K562 (cell line): ENCODE measurements at regions of chr5 and their contacts with region 1.

Region 1: DNA sequence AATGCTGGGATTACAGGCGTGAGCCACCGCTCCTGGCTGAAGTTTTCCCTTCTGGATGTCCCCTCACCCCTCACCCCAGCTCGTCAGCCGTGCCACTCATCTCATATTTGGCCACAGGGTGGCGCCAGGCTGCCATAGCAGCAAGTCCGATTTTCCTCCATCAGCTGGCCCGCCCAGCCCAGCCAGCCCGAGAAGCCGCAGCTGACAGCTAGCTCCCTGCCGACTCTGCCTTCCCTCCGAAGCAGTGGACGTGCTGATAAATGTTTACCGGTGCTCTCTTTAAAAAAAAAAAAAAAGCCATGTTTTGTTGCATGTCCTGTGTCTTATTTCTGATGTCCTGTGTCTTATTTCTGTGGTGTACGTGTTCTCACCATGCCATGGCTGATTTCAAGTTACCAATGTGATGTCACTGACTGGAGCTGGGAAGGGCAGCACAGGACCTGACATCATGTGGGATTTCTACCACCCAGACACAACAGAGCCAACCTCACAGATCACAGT is 58.3 kb downstream of the PFDN1 start:
- DNase-seq: peak; percentile 77 to 90 (median 81)
- ATAC-seq: peak; percentile 85
- H3K4me3 ChIP-seq: no peak overlapping the region
- H3K27ac ChIP-seq: no peak overlapping the region
- H3K4me1 ChIP-seq: peaks cover 15 to 27% of the 10 kb centered on the region in 2 experiments
- H3K27me3 ChIP-seq: no peaks in the 10 kb centered on the region
- CTCF ChIP-seq: peak; percentile 81 to 90 (median 90)
- EP300 ChIP-seq: no peak
- POLR2A ChIP-seq: no peak; the same call in 1 of the 2 replicates
- RAD21 ChIP-seq: peak; percentile 90 to 91

Region 2: DNA sequence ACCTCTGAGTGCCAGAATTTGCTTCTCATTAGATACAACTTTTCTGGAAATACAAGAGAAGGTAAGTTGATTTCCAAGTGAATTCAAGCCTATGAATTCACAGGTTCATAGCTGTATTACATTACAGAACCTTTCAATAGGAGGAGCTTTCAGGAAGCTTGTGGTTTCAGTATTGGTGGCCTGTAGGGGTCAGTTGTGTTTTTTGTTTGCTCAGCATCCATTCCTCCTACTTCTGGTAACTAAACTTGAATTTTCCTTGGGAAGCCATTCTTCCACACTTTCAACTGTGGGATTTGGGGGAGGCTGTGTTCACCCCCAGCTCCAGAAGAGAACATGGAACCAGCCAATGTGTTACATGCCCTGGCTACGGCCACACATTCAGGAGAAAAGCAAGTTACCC is 75.2 kb before region 1 on chr5:
- CTCF ChIA-PET with region 1: no interaction called
- POLR2A ChIA-PET with region 1: interaction called, 9 read pairs
- in situ Hi-C with region 1: no loop called
- intact Hi-C with region 1: loop called (anchors 1 kb)
- DNase-seq: peak in 2 of 4 experiments; percentile 49 to 55
- ATAC-seq: peak; percentile 78
- H3K4me3 ChIP-seq: no peak overlapping the region
- H3K27ac ChIP-seq: no peak overlapping the region
- H3K4me1 ChIP-seq: peaks cover 4 to 39% of the 10 kb centered on the region in 2 experiments; a peak in 4 of 5 replicates
- H3K27me3 ChIP-seq: no peaks in the 10 kb centered on the region; a peak in 1 of 5 replicates
- CTCF ChIP-seq: peak; percentile 33 to 69 (median 69); a peak in 5 of 6 replicates
- EP300 ChIP-seq: no peak
- POLR2A ChIP-seq: no peak
- RAD21 ChIP-seq: peak; percentile 42 to 71

Region 3: GRCh38 chr5:140346348-140347101 is 102.0 kb after region 1 on chr5 and contains the start of gene HBEGF:
- CTCF ChIA-PET with region 1: interaction called, 29 read pairs
- POLR2A ChIA-PET with region 1: interaction called, 4 read pairs
- in situ Hi-C with region 1: no loop called
- intact Hi-C with region 1: loop called (anchors 1 kb)
- DNase-seq: peak; percentile 92 to 97 (median 94)
- ATAC-seq: peak; percentile 94
- H3K4me3 ChIP-seq: peak within 1 kb of the TSS; percentile 42
- H3K27ac ChIP-seq: no peak within 1 kb of the TSS
- H3K4me1 ChIP-seq: peaks cover 13 to 23% of the 10 kb centered on the region in 2 experiments; a peak in 4 of 5 replicates
- H3K27me3 ChIP-seq: no peaks in the 10 kb centered on the region
- CTCF ChIP-seq: peak; percentile 77 to 82 (median 80)
- EP300 ChIP-seq: 0 out of 2 replicates have a peak, but pooled peaks have one; percentile 9
- POLR2A ChIP-seq: peak; percentile 49; the same call in 1 of the 2 replicates
- RAD21 ChIP-seq: peak; percentile 36 to 54; a peak in 3 of 4 replicates
- polyA plus RNA-seq, gene HBEGF: 0.11 to 0.29 TPM

Region 4: DNA sequence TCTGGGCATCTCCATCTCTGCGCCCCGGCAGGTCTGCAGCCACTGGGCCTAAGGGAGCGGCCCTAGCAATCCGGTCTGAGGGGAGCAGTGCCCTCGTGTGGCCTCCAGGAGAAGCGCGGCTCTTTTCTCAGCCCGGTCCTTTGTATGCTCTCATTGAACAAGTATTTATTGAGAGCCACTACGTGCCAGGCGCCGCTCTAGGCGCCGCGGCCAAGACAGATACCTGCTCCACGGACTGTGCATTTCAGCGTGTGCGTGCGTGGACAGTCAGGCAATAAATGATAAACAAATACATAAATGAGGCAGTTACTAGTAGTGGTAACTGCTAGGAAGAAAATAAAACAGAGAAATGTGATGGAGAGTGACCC is 113.1 kb after region 1 on chr5:
- CTCF ChIA-PET with region 1: interaction called, 37 read pairs
- POLR2A ChIA-PET with region 1: interaction called, 12 read pairs
- in situ Hi-C with region 1: loop called (anchors 5 kb)
- intact Hi-C with region 1: loop called (anchors 1 kb)
- DNase-seq: peak; percentile 81 to 85 (median 82)
- ATAC-seq: peak; percentile 97
- H3K4me3 ChIP-seq: peak overlapping the region; percentile 20
- H3K27ac ChIP-seq: no peak overlapping the region
- H3K4me1 ChIP-seq: peaks cover 0 to 12% of the 10 kb centered on the region in 2 experiments; a peak in 2 of 5 replicates
- H3K27me3 ChIP-seq: no peaks in the 10 kb centered on the region
- CTCF ChIP-seq: peak; percentile 94
- EP300 ChIP-seq: no peak
- POLR2A ChIP-seq: no peak
- RAD21 ChIP-seq: peak; percentile 79 to 88

Region 5: DNA sequence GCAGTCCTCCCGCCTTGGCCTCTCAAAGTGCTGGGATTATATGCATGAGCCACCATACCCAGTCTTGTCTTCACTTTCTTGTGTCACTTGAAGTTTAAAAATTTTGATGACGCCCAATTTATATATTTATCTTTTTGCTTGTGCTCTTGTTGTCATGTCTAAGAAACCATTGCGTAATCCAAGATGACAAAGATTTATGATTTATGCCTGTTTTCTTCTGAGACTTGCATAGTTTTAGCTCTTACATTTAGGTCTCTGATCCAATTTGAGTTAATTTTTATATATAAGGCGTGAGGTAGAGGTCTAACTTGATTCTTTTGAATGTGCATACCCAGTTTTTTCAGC is 175.6 kb after region 1 on chr5:
- CTCF ChIA-PET with region 1: no interaction called
- POLR2A ChIA-PET with region 1: no interaction called
- in situ Hi-C with region 1: no loop called
- intact Hi-C with region 1: no loop called
- DNase-seq: no peak
- ATAC-seq: no peak
- H3K4me3 ChIP-seq: no peak overlapping the region
- H3K27ac ChIP-seq: no peak overlapping the region
- H3K4me1 ChIP-seq: peaks cover 10 to 11% of the 10 kb centered on the region in 2 experiments; a peak in 3 of 5 replicates
- H3K27me3 ChIP-seq: no peaks in the 10 kb centered on the region
- CTCF ChIP-seq: no peak
- EP300 ChIP-seq: no peak
- POLR2A ChIP-seq: no peak
- RAD21 ChIP-seq: no peak

Region 6: GRCh38 chr5:140725799-140726471 is 481.4 kb after region 1 on chr5:
- CTCF ChIA-PET with region 1: no interaction called
- POLR2A ChIA-PET with region 1: no interaction called
- in situ Hi-C with region 1: loop called (anchors 10 kb)
- intact Hi-C with region 1: loop called (anchors 5 kb)
- DNase-seq: peak; percentile 73 to 96 (median 84)
- ATAC-seq: peak; percentile 98
- H3K4me3 ChIP-seq: peak overlapping the region; percentile 83
- H3K27ac ChIP-seq: peak overlapping the region; percentile 94
- H3K4me1 ChIP-seq: no peaks in the 10 kb centered on the region; a peak in 1 of 5 replicates
- H3K27me3 ChIP-seq: no peaks in the 10 kb centered on the region
- CTCF ChIP-seq: no peak; a peak in 1 of 6 replicates
- EP300 ChIP-seq: peak; percentile 88
- POLR2A ChIP-seq: peak; percentile 74
- RAD21 ChIP-seq: no peak

Region 7: DNA sequence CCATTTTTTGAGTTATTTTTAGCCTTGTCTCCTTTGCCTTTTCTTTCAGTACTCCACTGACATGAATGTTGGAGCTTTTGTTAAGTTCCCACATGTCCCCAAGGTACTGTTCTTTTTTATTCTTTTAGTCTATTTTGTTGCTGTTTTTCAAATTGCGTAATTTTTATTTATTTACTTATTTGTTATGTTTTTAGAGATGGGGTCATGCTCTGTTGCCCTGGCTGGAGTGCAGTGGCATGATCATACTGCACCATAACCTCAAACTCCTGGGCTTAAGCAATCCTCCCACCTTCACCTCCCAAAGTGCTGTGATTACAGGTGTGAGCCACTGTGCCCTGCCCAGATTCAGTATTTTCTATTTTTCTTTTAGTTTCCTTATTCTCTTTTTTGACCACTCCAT is 535.9 kb after region 1 on chr5:
- CTCF ChIA-PET with region 1: no interaction called
- POLR2A ChIA-PET with region 1: no interaction called
- in situ Hi-C with region 1: no loop called
- intact Hi-C with region 1: no loop called
- DNase-seq: no peak
- ATAC-seq: no peak
- H3K4me3 ChIP-seq: no peak overlapping the region
- H3K27ac ChIP-seq: no peak overlapping the region
- H3K4me1 ChIP-seq: no peaks in the 10 kb centered on the region; a peak in 1 of 5 replicates
- H3K27me3 ChIP-seq: no peaks in the 10 kb centered on the region
- CTCF ChIP-seq: no peak
- EP300 ChIP-seq: no peak
- POLR2A ChIP-seq: no peak
- RAD21 ChIP-seq: no peak